Kidney (tissue), 22 donors: ENCODE measurements at regions of chr1 and their contacts with region 1.

Region 1: DNA sequence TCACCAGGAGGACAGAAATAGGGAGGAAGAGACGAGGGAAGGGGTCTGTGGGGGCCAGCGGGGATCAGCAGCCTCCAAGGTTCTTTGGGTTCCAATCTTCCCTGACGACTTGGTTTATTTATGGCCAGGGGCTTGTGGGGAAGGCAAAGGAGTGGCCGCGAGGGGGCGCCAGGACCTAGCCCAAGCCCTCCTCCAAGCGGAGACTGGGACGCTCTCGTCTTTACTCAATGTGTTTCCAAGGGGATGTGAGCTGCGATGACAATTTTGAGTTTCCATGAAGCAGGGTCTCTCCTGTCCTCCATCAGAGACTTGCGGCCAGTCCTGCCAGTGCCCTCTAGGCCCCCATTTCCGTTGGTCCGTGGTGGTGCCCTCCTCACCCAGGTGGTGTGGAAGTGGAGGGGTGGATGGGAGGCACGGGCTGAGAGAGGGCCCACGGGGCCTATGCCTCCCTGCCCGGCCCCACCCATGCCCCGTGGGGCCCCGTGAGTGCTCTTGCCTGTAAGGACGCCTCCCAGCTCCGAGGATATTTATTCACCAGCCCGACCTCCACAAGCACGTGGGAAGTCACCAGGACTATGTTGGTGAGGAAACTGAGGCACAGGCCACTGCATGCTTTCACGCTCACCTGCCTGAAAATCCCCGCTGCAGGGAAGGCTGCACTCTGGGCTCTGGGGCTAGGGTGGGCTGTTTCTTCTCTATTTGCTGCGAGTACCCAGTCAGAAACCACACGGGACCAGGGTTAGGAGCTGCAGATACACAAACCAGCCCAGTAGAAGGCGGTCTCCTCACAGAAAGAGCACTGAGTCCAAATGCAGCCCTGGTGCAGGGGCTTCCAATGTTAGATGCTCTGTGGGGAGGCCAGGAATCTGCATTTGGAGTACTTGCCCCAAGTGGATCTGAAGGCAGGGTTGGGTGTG is 26.5 kb downstream of the DMRTB1 start:
- DNase-seq: peak; percentile 88 to 93 (median 91)
- H3K4me3 ChIP-seq: no peak overlapping the region
- H3K27ac ChIP-seq: no peak overlapping the region
- H3K4me1 ChIP-seq: no peaks in the 10 kb centered on the region
- H3K27me3 ChIP-seq: no peaks in the 10 kb centered on the region
- CTCF ChIP-seq: peak; percentile 92

Region 2: DNA sequence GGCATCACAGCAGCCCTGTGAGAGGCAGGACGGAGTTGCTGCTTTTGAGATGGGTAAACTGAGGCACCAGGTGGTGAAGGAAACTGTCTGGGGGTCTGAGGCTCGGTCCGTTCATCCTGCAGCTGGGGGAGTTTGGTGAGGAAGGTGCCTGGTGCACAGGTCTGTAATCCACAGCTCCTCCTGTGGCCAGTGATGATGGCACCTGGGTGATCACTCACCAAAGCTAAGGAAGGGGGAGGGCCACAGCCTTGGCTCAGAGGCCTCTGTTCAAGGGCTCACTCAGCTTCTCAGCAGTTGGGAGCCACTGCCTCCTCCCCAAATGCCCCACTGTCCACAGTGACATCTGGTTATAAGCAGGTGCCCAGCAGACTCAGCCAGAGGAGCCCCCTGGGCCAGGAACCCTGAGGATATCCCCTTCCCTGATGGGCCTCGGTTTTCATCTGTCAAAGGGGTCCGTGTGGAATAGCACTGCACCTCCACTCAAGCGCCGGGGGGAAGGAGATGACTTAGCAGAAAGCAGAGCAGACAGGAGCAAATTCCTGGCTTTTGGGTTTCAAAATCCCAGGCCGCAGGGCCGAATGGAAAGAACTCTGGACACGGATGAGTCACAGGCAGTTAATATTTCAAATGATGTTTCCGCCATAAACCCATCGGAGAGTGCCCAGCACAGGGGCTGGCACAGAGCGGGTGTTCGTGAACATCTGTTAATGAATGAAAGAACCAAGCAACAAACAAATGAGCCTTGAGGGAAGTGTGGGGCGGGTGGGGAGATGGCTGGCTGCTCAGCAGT is 56.2 kb after region 1 on chr1:
- intact Hi-C with region 1: no loop called
- DNase-seq: peak in 4 of 5 donors; percentile 43 to 91 (median 49)
- H3K4me3 ChIP-seq: no peak overlapping the region
- H3K27ac ChIP-seq: peak overlapping the region; percentile 43 to 49
- H3K4me1 ChIP-seq: peaks cover 0 to 10% (median 6%) of the 10 kb centered on the region in 3 donors
- H3K27me3 ChIP-seq: no peaks in the 10 kb centered on the region
- CTCF ChIP-seq: no peak

Region 3: GRCh38 chr1:53681977-53682685 is 196.4 kb after region 1 on chr1:
- intact Hi-C with region 1: loop called (anchors 5 kb)
- DNase-seq: peak in 4 of 5 donors; percentile 81 to 87 (median 82)
- H3K4me3 ChIP-seq: no peak overlapping the region
- H3K27ac ChIP-seq: no peak overlapping the region
- H3K4me1 ChIP-seq: peaks cover 0 to 3% (median 3%) of the 10 kb centered on the region in 3 donors
- H3K27me3 ChIP-seq: no peaks in the 10 kb centered on the region
- CTCF ChIP-seq: peak; percentile 51

Region 4: GRCh38 chr1:53754484-53755312 is 269.0 kb after region 1 on chr1:
- intact Hi-C with region 1: loop called (anchors 5 kb)
- DNase-seq: peak in 3 of 5 donors; percentile 42 to 83 (median 67)
- H3K4me3 ChIP-seq: no peak overlapping the region
- H3K27ac ChIP-seq: no peak overlapping the region
- H3K4me1 ChIP-seq: no peaks in the 10 kb centered on the region
- H3K27me3 ChIP-seq: no peaks in the 10 kb centered on the region
- CTCF ChIP-seq: peak; percentile 57